Activated CD4-positive, alpha-beta T cell treated with anti-CD3 and anti-CD28 coated beads for 36 hours (primary cell): ENCODE measurements at regions of chr16 and their contacts with region 1.

Region 1: GRCh38 chr16:85935974-85936760 is 37.2 kb downstream of the IRF8 start:
- DNase-seq: peak; percentile 90
- ATAC-seq: peak; percentile 83
- H3K4me3 Mint-ChIP-seq: peak overlapping the region; percentile 49
- H3K27ac Mint-ChIP-seq: peak overlapping the region; percentile 84
- H3K4me1 Mint-ChIP-seq: peaks cover 63% of the 10 kb centered on the region
- H3K27me3 Mint-ChIP-seq: no peaks in the 10 kb centered on the region

Region 2: DNA sequence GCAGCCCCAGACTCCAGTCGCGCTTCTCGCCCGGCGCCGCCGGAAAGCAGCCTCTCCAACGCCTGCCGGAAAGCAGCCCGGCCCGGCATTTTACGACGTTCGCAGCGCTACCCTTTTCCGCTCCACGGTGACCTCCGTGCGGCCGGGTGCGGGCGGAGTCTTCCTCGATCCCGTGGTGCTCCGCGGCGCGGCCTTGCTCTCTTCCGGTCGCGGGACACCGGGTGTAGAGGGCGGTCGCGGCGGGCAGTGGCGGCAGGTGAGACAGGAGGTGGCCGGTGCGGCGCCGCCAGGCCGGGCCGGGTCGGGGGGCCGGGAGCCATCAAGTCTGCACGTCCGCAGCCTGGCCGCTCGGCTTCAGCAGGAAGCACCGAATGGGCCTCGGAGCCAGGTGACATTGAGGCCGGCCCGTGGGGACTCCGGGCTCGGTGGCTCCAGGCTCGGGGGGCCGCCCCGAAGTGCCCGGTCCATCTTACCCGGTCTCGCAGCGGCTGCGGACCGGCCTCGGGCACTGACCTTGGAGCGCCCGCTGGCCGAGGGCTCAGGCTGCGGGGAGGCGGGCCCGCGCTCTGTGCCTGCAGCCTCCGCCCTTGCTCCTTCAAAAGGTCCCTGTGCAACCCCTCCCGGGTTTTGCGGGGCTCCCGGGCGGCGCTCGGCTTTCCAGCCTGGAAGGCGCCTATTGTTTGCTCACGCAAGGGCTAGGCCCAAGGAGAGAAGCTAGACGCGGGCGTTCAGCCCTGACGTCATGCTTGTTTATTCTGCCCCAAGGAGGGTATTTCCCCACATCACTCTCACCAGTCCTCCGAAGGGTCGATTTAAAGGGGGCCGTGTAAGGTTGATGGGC is 136.4 kb before region 1 on chr16 and contains the starts of genes COX4I1 and EMC8:
- CTCF ChIA-PET with region 1: no interaction called
- POLR2A ChIA-PET with region 1: no interaction called
- intact Hi-C with region 1: loop called in 1 of 2 experiments (anchors 1 kb)
- DNase-seq: peak; percentile 97
- ATAC-seq: peak; percentile 95
- H3K4me3 Mint-ChIP-seq: peak within 1 kb of the TSS; percentile 85
- H3K27ac Mint-ChIP-seq: peak within 1 kb of the TSS; percentile 89
- H3K4me1 Mint-ChIP-seq: peaks cover 60% of the 10 kb centered on the region
- H3K27me3 Mint-ChIP-seq: no peaks in the 10 kb centered on the region
- total RNA-seq, gene COX4I1: 374 to 508 TPM
- total RNA-seq, gene EMC8: 30.4 to 32.9 TPM

Region 3: DNA sequence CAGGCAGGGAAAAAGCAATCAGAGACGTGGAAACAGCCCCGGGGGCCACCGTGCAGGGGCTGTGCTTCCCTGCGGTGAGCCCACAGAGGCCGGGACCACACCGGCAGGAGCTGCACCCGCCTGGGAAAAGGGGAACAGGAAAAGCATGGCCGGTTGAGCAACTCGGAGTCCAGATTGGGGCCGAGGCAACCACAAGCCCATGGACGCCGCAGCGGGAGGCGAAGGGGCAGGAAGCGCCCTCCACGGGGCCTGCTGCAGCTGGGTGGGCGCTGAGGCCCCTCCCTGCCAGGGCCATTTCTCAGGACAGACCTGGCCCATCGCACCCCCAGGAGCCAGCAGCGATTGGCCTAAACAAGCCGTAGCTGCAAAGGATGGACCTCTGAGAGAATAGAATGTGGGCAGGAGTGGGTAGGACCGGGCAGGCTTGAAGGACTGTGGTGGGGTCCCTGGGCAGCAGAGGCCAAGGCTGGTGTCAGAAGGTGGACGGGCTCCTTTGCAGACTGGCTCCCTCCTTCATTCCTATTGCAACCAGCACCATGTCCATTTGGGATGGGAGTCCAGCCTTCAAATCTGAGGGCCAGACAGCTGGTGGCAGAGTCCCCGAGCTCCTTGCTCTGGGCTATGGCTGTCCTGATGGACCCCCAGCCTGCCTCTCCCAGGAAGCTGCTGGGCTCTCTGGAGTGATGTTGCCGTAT is 106.3 kb before region 1 on chr16:
- CTCF ChIA-PET with region 1: no interaction called
- POLR2A ChIA-PET with region 1: no interaction called
- intact Hi-C with region 1: no loop called
- DNase-seq: no peak
- ATAC-seq: no peak
- H3K4me3 Mint-ChIP-seq: no peak overlapping the region
- H3K27ac Mint-ChIP-seq: no peak overlapping the region
- H3K4me1 Mint-ChIP-seq: peaks cover 13% of the 10 kb centered on the region
- H3K27me3 Mint-ChIP-seq: peaks cover 38% of the 10 kb centered on the region

Region 4: GRCh38 chr16:85879975-85880831 is 56.0 kb before region 1 on chr16:
- CTCF ChIA-PET with region 1: no interaction called
- POLR2A ChIA-PET with region 1: no interaction called
- intact Hi-C with region 1: loop called in 1 of 2 experiments (anchors 1 kb)
- DNase-seq: peak; percentile 31
- ATAC-seq: peak; percentile 93
- H3K4me3 Mint-ChIP-seq: no peak overlapping the region
- H3K27ac Mint-ChIP-seq: no peak overlapping the region
- H3K4me1 Mint-ChIP-seq: peaks cover 33% of the 10 kb centered on the region
- H3K27me3 Mint-ChIP-seq: peaks cover 31% of the 10 kb centered on the region

Region 5: GRCh38 chr16:85898521-85899442 is 37.4 kb before region 1 on chr16 and contains the start of gene IRF8:
- CTCF ChIA-PET with region 1: interaction called, 4 read pairs
- POLR2A ChIA-PET with region 1: interaction called, 3 read pairs
- intact Hi-C with region 1: loop called (anchors 1 to 2 kb)
- DNase-seq: peak; percentile 92
- ATAC-seq: peak; percentile 81
- H3K4me3 Mint-ChIP-seq: peak within 1 kb of the TSS; percentile 78
- H3K27ac Mint-ChIP-seq: peak within 1 kb of the TSS; percentile 92
- H3K4me1 Mint-ChIP-seq: peaks cover 47% of the 10 kb centered on the region
- H3K27me3 Mint-ChIP-seq: peaks cover 3% of the 10 kb centered on the region
- total RNA-seq, gene IRF8: 227 to 250 TPM

Region 6: DNA sequence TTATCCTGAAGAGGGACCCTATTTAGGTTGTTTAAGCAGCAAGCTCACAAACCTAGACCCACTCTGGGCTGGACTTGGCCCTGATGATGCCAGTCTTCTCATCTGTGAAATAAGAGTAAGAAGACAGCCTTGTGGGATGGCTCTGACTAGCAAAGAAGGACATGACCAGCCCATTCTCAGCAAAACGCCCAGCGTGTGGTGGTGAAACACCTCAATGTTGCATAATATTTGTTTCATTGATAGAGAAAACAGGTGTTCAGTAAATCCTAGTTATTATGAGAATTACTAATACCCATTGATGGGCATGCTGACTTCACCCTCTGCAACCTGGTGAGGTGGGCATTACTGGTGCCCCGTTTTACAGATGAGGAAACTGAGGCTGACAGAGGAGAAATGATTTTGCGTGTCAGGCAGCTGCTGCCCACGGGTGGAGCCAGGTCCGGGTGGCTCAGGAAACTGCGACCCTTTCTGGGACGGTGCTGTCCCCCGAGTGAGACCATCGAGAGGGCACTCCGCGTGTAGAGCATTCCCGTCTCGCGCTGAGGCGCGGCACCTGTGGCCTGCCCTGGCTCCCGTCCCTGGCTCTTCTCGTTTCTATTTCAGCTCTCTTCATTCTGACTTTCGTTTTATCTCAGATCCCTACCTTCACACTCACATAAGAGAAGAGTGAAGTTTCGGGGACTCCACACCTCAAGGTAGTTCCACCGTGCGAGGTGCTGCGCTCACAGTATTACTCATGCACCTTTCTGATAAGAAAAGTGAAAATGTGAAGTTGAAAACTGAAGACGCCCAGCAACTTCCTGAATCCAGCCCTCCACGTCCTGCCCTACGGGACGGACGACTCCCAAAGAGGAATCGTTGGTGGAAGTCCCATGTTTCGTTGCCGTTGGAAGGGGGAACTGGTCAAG is 11.3 kb after region 1 on chr16:
- CTCF ChIA-PET with region 1: no interaction called
- POLR2A ChIA-PET with region 1: interaction called, 7 read pairs
- intact Hi-C with region 1: loop called (anchors 1 kb)
- DNase-seq: peak; percentile 80
- ATAC-seq: peak; percentile 90
- H3K4me3 Mint-ChIP-seq: peak overlapping the region; percentile 29
- H3K27ac Mint-ChIP-seq: peak overlapping the region; percentile 58
- H3K4me1 Mint-ChIP-seq: peaks cover 72% of the 10 kb centered on the region
- H3K27me3 Mint-ChIP-seq: peaks cover 9% of the 10 kb centered on the region

Region 7: GRCh38 chr16:85986931-85987749 is 51.0 kb after region 1 on chr16:
- CTCF ChIA-PET with region 1: interaction called, 37 read pairs
- POLR2A ChIA-PET with region 1: interaction called, 13 read pairs
- intact Hi-C with region 1: loop called (anchors 1 kb)
- DNase-seq: peak; percentile 76
- ATAC-seq: peak; percentile 16
- H3K4me3 Mint-ChIP-seq: no peak overlapping the region
- H3K27ac Mint-ChIP-seq: peak overlapping the region; percentile 99
- H3K4me1 Mint-ChIP-seq: peaks cover 78% of the 10 kb centered on the region
- H3K27me3 Mint-ChIP-seq: no peaks in the 10 kb centered on the region

Region 8: DNA sequence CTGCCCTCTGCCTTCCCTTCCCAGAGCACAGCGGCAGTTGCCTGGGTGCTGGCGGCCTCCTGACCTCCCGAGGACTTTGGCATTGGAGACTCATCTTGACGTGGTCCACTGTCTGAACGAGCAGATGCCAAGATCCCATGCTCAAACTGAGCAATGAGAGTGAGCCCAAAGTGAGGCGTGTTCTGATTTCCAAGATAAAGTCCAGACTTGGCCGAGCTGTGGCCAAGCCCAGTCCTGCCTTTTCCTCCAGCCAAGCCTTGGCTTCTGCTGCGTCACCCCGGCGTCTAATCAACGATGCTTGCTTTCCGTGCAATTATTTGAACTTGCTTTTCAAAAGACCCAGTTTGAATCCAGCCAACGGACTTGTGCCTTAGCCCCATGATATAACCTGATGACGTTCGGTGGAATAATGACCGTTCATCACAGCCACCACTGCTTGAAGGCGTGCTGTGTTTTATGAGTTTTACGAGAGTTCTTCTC is 142.0 kb after region 1 on chr16:
- CTCF ChIA-PET with region 1: no interaction called
- POLR2A ChIA-PET with region 1: no interaction called
- intact Hi-C with region 1: no loop called
- DNase-seq: no peak
- ATAC-seq: no peak
- H3K4me3 Mint-ChIP-seq: no peak overlapping the region
- H3K27ac Mint-ChIP-seq: no peak overlapping the region
- H3K4me1 Mint-ChIP-seq: no peaks in the 10 kb centered on the region
- H3K27me3 Mint-ChIP-seq: peaks cover 3% of the 10 kb centered on the region